ENCODE measurements at regions of chr12 and their contacts with region 1.

Region 1: GRCh38 chr12:11648831-11649702 is at the start of gene ETV6:
- DNase-seq: peak; percentile 89
- ATAC-seq: peak; percentile 52
- H3K4me3 Mint-ChIP-seq: peak within 1 kb of the TSS; percentile 93
- H3K27ac Mint-ChIP-seq: peak within 1 kb of the TSS; percentile 100
- H3K4me1 Mint-ChIP-seq: peaks cover 27% of the 10 kb centered on the region
- H3K27me3 Mint-ChIP-seq: no peaks in the 10 kb centered on the region
- total RNA-seq, gene ETV6: 53.5 to 56.7 TPM

Region 2: GRCh38 chr12:10613349-10614055 is 1035.6 kb before region 1 on chr12 and contains the start of gene MAGOHB:
- CTCF ChIA-PET with region 1: no interaction called
- POLR2A ChIA-PET with region 1: no interaction called
- intact Hi-C with region 1: loop called in 1 of 2 experiments (anchors 5 kb)
- DNase-seq: peak; percentile 99
- ATAC-seq: peak; percentile 96
- H3K4me3 Mint-ChIP-seq: peak within 1 kb of the TSS; percentile 99
- H3K27ac Mint-ChIP-seq: peak within 1 kb of the TSS; percentile 100
- H3K4me1 Mint-ChIP-seq: peaks cover 25% of the 10 kb centered on the region
- H3K27me3 Mint-ChIP-seq: peaks cover 6% of the 10 kb centered on the region
- total RNA-seq, gene MAGOHB: 66.3 to 89.3 TPM

Region 3: GRCh38 chr12:11581179-11581755 is 67.8 kb before region 1 on chr12:
- CTCF ChIA-PET with region 1: interaction called, 7 read pairs
- POLR2A ChIA-PET with region 1: no interaction called
- intact Hi-C with region 1: loop called (anchors 1 to 5 kb)
- DNase-seq: peak; percentile 83
- ATAC-seq: no peak
- H3K4me3 Mint-ChIP-seq: no peak overlapping the region
- H3K27ac Mint-ChIP-seq: no peak overlapping the region
- H3K4me1 Mint-ChIP-seq: peaks cover 19% of the 10 kb centered on the region
- H3K27me3 Mint-ChIP-seq: peaks cover 5% of the 10 kb centered on the region

Region 4: DNA sequence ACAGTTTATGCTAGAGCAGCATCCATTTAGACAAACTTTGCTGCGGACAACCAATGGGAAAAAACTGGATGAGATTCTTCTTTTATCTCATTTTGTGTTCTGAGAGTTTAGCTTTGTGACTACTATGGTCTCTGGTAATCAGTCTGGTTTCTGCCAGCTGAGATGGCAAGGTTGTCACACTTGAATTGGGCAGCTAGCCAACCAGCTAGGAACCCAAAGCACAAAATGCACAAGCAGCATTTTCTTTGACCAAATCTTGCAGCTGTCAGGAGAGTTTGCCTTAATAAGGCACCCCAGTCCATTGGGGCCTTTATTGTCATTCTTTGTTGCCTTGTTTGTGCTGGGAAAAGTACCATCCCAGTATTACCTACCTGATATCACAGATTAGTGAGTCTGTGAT is 33.6 kb before region 1 on chr12:
- CTCF ChIA-PET with region 1: no interaction called
- POLR2A ChIA-PET with region 1: no interaction called
- intact Hi-C with region 1: no loop called
- DNase-seq: no peak
- ATAC-seq: no peak
- H3K4me3 Mint-ChIP-seq: no peak overlapping the region
- H3K27ac Mint-ChIP-seq: no peak overlapping the region
- H3K4me1 Mint-ChIP-seq: no peaks in the 10 kb centered on the region
- H3K27me3 Mint-ChIP-seq: no peaks in the 10 kb centered on the region

Region 5: GRCh38 chr12:11765817-11766794 is 117.0 kb after region 1 on chr12:
- CTCF ChIA-PET with region 1: no interaction called
- POLR2A ChIA-PET with region 1: interaction called, 13 read pairs
- intact Hi-C with region 1: loop called (anchors 1 to 2 kb)
- DNase-seq: peak; percentile 90
- ATAC-seq: peak; percentile 89
- H3K4me3 Mint-ChIP-seq: peak overlapping the region; percentile 32
- H3K27ac Mint-ChIP-seq: peak overlapping the region; percentile 84
- H3K4me1 Mint-ChIP-seq: peaks cover 100% of the 10 kb centered on the region
- H3K27me3 Mint-ChIP-seq: no peaks in the 10 kb centered on the region

Region 6: DNA sequence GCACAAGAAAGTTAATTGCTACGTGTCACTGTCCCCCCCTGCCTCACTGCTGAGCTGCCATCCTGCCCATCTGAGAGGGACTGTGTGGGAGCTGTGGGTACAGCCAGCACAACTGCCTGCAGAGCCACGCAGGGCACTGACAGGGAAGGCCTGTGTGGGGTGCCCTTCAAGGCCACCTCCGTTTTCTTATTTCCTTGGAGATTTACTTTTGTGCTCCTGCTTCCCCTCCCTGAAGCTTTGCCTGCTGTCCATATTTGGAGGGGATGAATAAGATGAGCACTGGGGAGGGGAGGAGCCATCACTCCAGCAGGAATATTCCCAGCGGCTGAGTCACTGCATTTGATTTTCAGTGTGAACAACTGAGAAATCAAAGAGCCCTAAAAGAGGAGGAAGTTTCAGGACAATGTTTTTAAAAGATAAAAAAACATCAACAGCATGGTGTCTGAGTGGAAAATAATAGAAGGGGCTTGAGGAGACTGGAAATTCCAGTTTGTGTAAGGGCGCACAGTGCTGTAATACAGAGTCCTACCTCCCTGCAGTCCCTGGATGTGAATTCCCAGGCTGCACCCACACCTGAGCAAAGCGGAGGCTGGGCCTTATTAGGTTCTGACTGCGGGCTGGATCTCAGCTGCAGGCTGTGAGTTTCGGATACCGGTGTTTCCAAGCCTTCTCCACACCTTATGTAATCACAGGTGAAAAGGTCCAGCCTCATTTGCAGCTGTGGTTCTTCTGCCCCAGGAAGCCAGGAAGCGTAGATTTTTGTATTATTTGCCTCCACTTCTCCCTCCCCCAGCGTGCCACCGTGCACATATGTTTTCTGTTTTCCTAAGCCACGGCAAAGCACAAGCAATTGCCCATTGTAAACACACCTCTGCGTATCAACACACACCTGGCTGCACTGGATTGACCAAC is 229.1 kb after region 1 on chr12:
- CTCF ChIA-PET with region 1: no interaction called
- POLR2A ChIA-PET with region 1: no interaction called
- intact Hi-C with region 1: loop called (anchors 5 kb)
- DNase-seq: peak; percentile 32
- ATAC-seq: peak; percentile 28
- H3K4me3 Mint-ChIP-seq: no peak overlapping the region
- H3K27ac Mint-ChIP-seq: peak overlapping the region; percentile 73
- H3K4me1 Mint-ChIP-seq: peaks cover 52% of the 10 kb centered on the region
- H3K27me3 Mint-ChIP-seq: no peaks in the 10 kb centered on the region

Region 7: GRCh38 chr12:12032851-12033588 is 384.0 kb after region 1 on chr12:
- CTCF ChIA-PET with region 1: interaction called, 3 read pairs
- POLR2A ChIA-PET with region 1: interaction called, 5 read pairs
- intact Hi-C with region 1: loop called (anchors 1 to 2 kb)
- DNase-seq: peak; percentile 78
- ATAC-seq: peak; percentile 73
- H3K4me3 Mint-ChIP-seq: peak overlapping the region; percentile 60
- H3K27ac Mint-ChIP-seq: peak overlapping the region; percentile 91
- H3K4me1 Mint-ChIP-seq: peaks cover 46% of the 10 kb centered on the region
- H3K27me3 Mint-ChIP-seq: no peaks in the 10 kb centered on the region

Region 8: DNA sequence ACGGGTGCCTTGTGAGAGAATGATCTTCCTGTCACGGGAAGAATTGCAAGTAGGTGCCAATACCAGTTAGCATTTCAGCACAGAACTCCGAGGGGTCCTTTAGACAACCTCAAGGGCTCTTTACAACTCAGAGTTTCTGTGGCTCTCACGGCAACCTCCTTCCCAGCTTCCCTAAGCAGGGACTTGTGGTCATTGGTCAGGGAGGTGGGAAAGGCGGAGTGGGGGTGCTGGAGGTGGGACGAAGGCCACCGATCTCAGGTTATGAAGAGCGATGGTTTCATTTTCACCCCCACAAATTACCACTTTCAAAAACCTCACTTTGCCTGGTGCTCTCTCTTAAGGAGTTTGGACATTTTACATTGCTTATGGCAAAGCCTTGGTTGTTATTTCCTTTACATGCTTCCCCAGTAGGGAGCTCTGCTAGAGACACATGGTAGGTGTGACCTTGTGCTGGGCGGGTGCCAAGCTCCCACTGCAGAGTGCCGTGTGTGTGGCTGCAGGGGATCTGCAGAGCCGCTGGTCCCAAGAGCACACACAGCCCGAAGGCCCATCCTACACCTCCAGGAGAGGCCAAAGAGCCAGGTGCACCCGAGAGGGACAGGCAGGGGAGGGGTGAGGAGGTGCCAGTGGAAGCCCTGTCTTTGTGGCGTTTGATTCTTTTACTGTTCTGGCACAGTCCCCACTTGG is 443.1 kb after region 1 on chr12:
- CTCF ChIA-PET with region 1: no interaction called
- POLR2A ChIA-PET with region 1: no interaction called
- intact Hi-C with region 1: no loop called
- DNase-seq: no peak
- ATAC-seq: no peak
- H3K4me3 Mint-ChIP-seq: no peak overlapping the region
- H3K27ac Mint-ChIP-seq: no peak overlapping the region
- H3K4me1 Mint-ChIP-seq: no peaks in the 10 kb centered on the region
- H3K27me3 Mint-ChIP-seq: peaks cover 4% of the 10 kb centered on the region